ENCODE measurements at regions of chr12 and their contacts with region 1.

Region 1: GRCh38 chr12:50074936-50075807 is 10.0 kb upstream of the SMARCD1 start:
- DNase-seq: peak; percentile 37
- ATAC-seq: peak; percentile 96
- H3K4me3 ChIP-seq: no peak overlapping the region
- H3K27ac ChIP-seq: no peak overlapping the region
- H3K4me1 ChIP-seq: no peaks in the 10 kb centered on the region; the same call in 1 of the 2 replicates
- H3K27me3 ChIP-seq: no peaks in the 10 kb centered on the region; a peak in 1 of 4 replicates
- CTCF ChIP-seq: peak; percentile 91 to 98 (median 95); a peak in 5 of 6 replicates
- EP300 ChIP-seq: no peak
- POLR2A ChIP-seq: no peak
- RAD21 ChIP-seq: peak; percentile 87

Region 2: DNA sequence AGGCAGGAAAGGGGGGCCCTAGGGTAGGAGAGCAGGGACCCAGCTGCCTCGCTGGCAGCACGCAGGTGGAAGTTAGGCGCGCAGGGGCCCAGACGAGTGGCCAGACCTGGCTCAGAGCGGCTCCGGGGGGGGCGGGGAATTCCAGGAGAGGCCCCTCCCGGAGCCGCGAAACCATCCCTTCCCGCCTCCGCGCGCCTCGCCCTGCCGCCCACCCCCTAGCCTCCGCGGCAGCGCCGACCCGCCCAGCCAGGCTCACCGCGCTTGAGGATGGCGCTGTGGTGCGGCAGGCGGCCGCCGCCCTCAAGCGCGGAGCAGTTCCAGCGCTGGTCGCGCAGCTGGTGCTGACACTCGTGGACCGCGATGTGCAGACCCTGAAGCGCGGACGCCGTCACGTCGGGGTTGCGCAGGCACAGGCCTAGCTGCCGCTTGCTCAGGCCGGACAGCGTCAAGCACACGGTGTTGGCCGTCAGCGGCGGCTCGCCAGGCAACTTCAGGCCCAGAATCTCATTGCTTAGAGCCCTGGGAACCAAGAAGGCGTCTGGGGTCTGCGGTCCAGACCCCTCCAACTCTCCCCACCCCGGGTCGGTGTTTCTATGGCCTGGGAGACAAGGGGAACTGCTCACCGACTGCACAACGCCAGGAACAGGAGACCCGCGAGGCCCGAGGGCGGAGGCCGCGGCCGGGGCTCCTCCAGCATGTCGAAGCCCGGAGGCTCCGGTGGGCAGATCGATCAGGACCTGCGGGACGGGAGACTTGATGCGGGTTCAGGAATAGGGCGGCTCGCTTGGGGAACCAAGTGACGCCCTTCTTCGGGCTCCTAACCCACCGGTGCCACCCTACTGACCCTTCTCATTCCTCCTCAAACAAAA is 1105.1 kb before region 1 on chr12:
- CTCF ChIA-PET with region 1: no interaction called
- POLR2A ChIA-PET with region 1: no interaction called
- RAD21 ChIA-PET with region 1: no interaction called
- SMC1A ChIA-PET with region 1: no interaction called
- in situ Hi-C with region 1: no loop called
- intact Hi-C with region 1: no loop called
- DNase-seq: no peak
- ATAC-seq: peak; percentile 51
- H3K4me3 ChIP-seq: no peak overlapping the region
- H3K27ac ChIP-seq: no peak overlapping the region
- H3K4me1 ChIP-seq: peaks cover 47% of the 10 kb centered on the region
- H3K27me3 ChIP-seq: peaks cover 19 to 30% of the 10 kb centered on the region in 2 experiments
- CTCF ChIP-seq: peak in 1 of 3 experiments; percentile 7; a peak in 2 of 6 replicates
- EP300 ChIP-seq: no peak
- POLR2A ChIP-seq: no peak
- RAD21 ChIP-seq: no peak

Region 3: GRCh38 chr12:49903695-49904423 is 171.3 kb before region 1 on chr12 and contains the start of gene FAIM2:
- CTCF ChIA-PET with region 1: no interaction called
- POLR2A ChIA-PET with region 1: no interaction called
- RAD21 ChIA-PET with region 1: no interaction called
- SMC1A ChIA-PET with region 1: no interaction called
- in situ Hi-C with region 1: no loop called
- intact Hi-C with region 1: no loop called
- DNase-seq: no peak
- ATAC-seq: peak; percentile 59
- H3K4me3 ChIP-seq: no peak within 1 kb of the TSS
- H3K27ac ChIP-seq: no peak within 1 kb of the TSS
- H3K4me1 ChIP-seq: no peaks in the 10 kb centered on the region
- H3K27me3 ChIP-seq: peaks cover 6 to 8% of the 10 kb centered on the region in 2 experiments
- CTCF ChIP-seq: no peak
- EP300 ChIP-seq: no peak
- POLR2A ChIP-seq: no peak
- RAD21 ChIP-seq: no peak
- polyA plus RNA-seq, gene FAIM2: not detected

Region 4: GRCh38 chr12:49945394-49946080 is 129.6 kb before region 1 on chr12:
- CTCF ChIA-PET with region 1: interaction called, 12 read pairs
- POLR2A ChIA-PET with region 1: no interaction called
- RAD21 ChIA-PET with region 1: no interaction called
- SMC1A ChIA-PET with region 1: interaction called, 5 read pairs
- in situ Hi-C with region 1: no loop called
- intact Hi-C with region 1: no loop called
- DNase-seq: peak; percentile 45
- ATAC-seq: peak; percentile 100
- H3K4me3 ChIP-seq: no peak overlapping the region
- H3K27ac ChIP-seq: no peak overlapping the region
- H3K4me1 ChIP-seq: no peaks in the 10 kb centered on the region
- H3K27me3 ChIP-seq: no peaks in the 10 kb centered on the region; a peak in 1 of 4 replicates
- CTCF ChIP-seq: peak; percentile 85 to 93 (median 92)
- EP300 ChIP-seq: no peak
- POLR2A ChIP-seq: no peak
- RAD21 ChIP-seq: no peak

Region 5: GRCh38 chr12:50043854-50044253 is 31.3 kb before region 1 on chr12:
- CTCF ChIA-PET with region 1: interaction called, 100 read pairs
- POLR2A ChIA-PET with region 1: no interaction called
- RAD21 ChIA-PET with region 1: interaction called, 11 read pairs
- SMC1A ChIA-PET with region 1: interaction called, 37 read pairs
- in situ Hi-C with region 1: no loop called
- intact Hi-C with region 1: loop called (anchors 1 kb)
- DNase-seq: no peak
- ATAC-seq: no peak
- H3K4me3 ChIP-seq: no peak overlapping the region
- H3K27ac ChIP-seq: no peak overlapping the region
- H3K4me1 ChIP-seq: no peaks in the 10 kb centered on the region
- H3K27me3 ChIP-seq: no peaks in the 10 kb centered on the region
- CTCF ChIP-seq: no peak
- EP300 ChIP-seq: no peak
- POLR2A ChIP-seq: no peak
- RAD21 ChIP-seq: no peak

Region 6: GRCh38 chr12:50167041-50167828 is 92.1 kb after region 1 on chr12 and contains the start of gene CERS5:
- CTCF ChIA-PET with region 1: interaction called, 12 read pairs
- POLR2A ChIA-PET with region 1: interaction called, 8 read pairs
- RAD21 ChIA-PET with region 1: interaction called, 3 read pairs
- SMC1A ChIA-PET with region 1: interaction called, 4 read pairs
- in situ Hi-C with region 1: no loop called
- intact Hi-C with region 1: no loop called
- DNase-seq: peak; percentile 85
- ATAC-seq: peak; percentile 99
- H3K4me3 ChIP-seq: peak within 1 kb of the TSS; percentile 80
- H3K27ac ChIP-seq: peak within 1 kb of the TSS; percentile 71
- H3K4me1 ChIP-seq: no peaks in the 10 kb centered on the region
- H3K27me3 ChIP-seq: no peaks in the 10 kb centered on the region
- CTCF ChIP-seq: no peak
- EP300 ChIP-seq: peak in 1 of 2 experiments; percentile 22; a peak in 1 of 4 replicates
- POLR2A ChIP-seq: peak; percentile 87
- RAD21 ChIP-seq: no peak
- polyA plus RNA-seq, gene CERS5: 6.8 to 12.2 TPM

Region 7: GRCh38 chr12:50314629-50315312 is 239.6 kb after region 1 on chr12:
- CTCF ChIA-PET with region 1: interaction called, 14 read pairs
- POLR2A ChIA-PET with region 1: no interaction called
- RAD21 ChIA-PET with region 1: interaction called, 3 read pairs
- SMC1A ChIA-PET with region 1: interaction called, 4 read pairs
- in situ Hi-C with region 1: loop called (anchors 5 kb)
- intact Hi-C with region 1: loop called (anchors 1 kb)
- DNase-seq: no peak
- ATAC-seq: peak; percentile 62
- H3K4me3 ChIP-seq: no peak overlapping the region
- H3K27ac ChIP-seq: no peak overlapping the region
- H3K4me1 ChIP-seq: no peaks in the 10 kb centered on the region
- H3K27me3 ChIP-seq: no peaks in the 10 kb centered on the region
- CTCF ChIP-seq: peak; percentile 44 to 63 (median 51); a peak in 5 of 6 replicates
- EP300 ChIP-seq: no peak
- POLR2A ChIP-seq: no peak
- RAD21 ChIP-seq: peak; percentile 83